B cell (primary cell): ENCODE measurements at regions of chr12 and their contacts with region 1.

Region 1: GRCh38 chr12:21677622-21678277 is 20.1 kb upstream of the LDHB start:
- DNase-seq: no peak
- ATAC-seq: no peak
- H3K4me3 ChIP-seq: no peak overlapping the region
- H3K4me3 Mint-ChIP-seq: no peak overlapping the region
- H3K27ac ChIP-seq: no peak overlapping the region
- H3K27ac Mint-ChIP-seq: no peak overlapping the region
- H3K4me1 ChIP-seq: no peaks in the 10 kb centered on the region
- H3K4me1 Mint-ChIP-seq: no peaks in the 10 kb centered on the region
- H3K27me3 ChIP-seq: no peaks in the 10 kb centered on the region
- H3K27me3 Mint-ChIP-seq: peaks cover 11% of the 10 kb centered on the region
- CTCF ChIP-seq: no peak

Region 2: DNA sequence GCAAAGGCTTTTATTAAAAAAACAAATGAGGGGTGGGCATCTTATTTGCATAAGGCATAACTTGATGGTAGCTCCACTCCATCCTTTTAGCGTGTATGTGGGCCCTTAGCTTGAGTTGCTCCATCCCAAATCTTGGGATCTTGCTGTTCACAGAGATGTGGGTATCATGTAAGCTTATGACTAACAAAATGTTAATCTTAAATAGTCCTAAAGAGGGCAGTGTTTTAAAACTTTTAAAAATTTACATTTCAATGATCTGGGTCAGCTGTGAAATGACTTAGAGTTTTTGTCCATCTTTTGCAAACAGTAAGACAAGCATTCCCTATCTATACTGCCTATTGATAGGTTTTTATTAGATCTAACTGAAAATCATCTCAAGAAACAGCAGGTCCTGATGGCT is 429.1 kb before region 1 on chr12:
- CTCF ChIA-PET with region 1: interaction called, 29 read pairs
- POLR2A ChIA-PET with region 1: no interaction called
- intact Hi-C with region 1: loop called (anchors 1 kb)
- DNase-seq: no peak
- ATAC-seq: no peak
- H3K4me3 ChIP-seq: no peak overlapping the region
- H3K4me3 Mint-ChIP-seq: no peak overlapping the region
- H3K27ac ChIP-seq: no peak overlapping the region
- H3K27ac Mint-ChIP-seq: no peak overlapping the region
- H3K4me1 ChIP-seq: no peaks in the 10 kb centered on the region
- H3K4me1 Mint-ChIP-seq: no peaks in the 10 kb centered on the region
- H3K27me3 ChIP-seq: no peaks in the 10 kb centered on the region
- H3K27me3 Mint-ChIP-seq: no peaks in the 10 kb centered on the region
- CTCF ChIP-seq: peak; percentile 18

Region 3: GRCh38 chr12:21501379-21501956 is 176.3 kb before region 1 on chr12 and contains the starts of genes GOLT1B and RECQL:
- CTCF ChIA-PET with region 1: interaction called, 3 read pairs
- POLR2A ChIA-PET with region 1: no interaction called
- intact Hi-C with region 1: loop called (anchors 1 kb)
- DNase-seq: peak; percentile 96
- ATAC-seq: peak; percentile 95
- H3K4me3 ChIP-seq: peak within 1 kb of the TSS; percentile 69 to 97 (median 92)
- H3K4me3 Mint-ChIP-seq: no peak within 1 kb of the TSS
- H3K27ac ChIP-seq: peak within 1 kb of the TSS; percentile 70 to 89
- H3K27ac Mint-ChIP-seq: no peak within 1 kb of the TSS
- H3K4me1 ChIP-seq: peaks cover 26 to 28% of the 10 kb centered on the region in 2 donors
- H3K4me1 Mint-ChIP-seq: peaks cover 37% of the 10 kb centered on the region
- H3K27me3 ChIP-seq: no peaks in the 10 kb centered on the region
- H3K27me3 Mint-ChIP-seq: no peaks in the 10 kb centered on the region
- CTCF ChIP-seq: no peak
- total RNA-seq, gene GOLT1B: 25.1 and 26.3 TPM in 2 replicates
- total RNA-seq, gene RECQL: 54.8 and 56.3 TPM in 2 replicates

Region 4: DNA sequence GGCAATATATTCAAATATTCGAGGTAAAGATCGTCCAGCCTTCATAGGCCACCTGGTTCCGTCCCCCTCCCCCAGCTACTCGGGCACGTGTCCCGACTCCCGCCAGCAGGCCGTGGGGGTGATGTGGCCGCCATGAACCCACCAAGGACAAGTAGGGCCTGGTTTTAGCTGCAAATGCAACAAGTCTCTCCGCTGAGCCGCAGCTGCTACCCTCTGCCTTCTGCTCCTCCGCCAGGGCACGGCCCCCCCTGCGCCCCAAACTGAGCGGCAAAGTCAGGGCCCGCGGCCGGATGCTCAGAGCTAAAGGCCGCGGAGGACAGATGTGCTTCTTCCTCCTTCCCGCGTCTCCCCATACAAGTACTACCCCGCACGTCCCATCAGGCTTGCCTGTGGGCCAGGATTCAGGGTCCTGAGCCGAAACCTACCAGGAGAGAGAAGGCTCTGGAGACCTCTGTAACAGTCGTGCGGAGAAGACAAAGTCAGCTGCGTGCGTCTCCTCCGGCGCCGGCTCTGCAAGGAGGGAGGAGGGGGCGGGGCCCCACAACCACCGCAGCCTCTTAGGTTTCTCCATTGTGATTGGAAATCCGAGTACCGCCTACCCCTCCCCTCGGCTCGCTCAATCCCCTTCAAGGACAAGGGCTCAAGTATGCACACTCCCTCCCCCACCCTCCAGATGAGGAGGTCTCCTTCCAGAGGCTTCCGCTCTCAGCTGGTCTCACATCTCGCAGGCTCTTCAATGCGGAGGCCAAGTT is 20.2 kb before region 1 on chr12 and contains the start of gene LDHB:
- CTCF ChIA-PET with region 1: interaction called, 6 read pairs
- POLR2A ChIA-PET with region 1: no interaction called
- intact Hi-C with region 1: loop called (anchors 2 kb)
- DNase-seq: peak; percentile 85
- ATAC-seq: peak; percentile 96
- H3K4me3 ChIP-seq: peak within 1 kb of the TSS; percentile 81 to 94 (median 88)
- H3K4me3 Mint-ChIP-seq: peak within 1 kb of the TSS; percentile 93
- H3K27ac ChIP-seq: peak within 1 kb of the TSS; percentile 61 to 68
- H3K27ac Mint-ChIP-seq: peak within 1 kb of the TSS; percentile 97
- H3K4me1 ChIP-seq: peaks cover 8 to 13% of the 10 kb centered on the region in 2 donors
- H3K4me1 Mint-ChIP-seq: peaks cover 30% of the 10 kb centered on the region
- H3K27me3 ChIP-seq: peaks cover 0 to 2% (median 0%) of the 10 kb centered on the region in 4 experiments
- H3K27me3 Mint-ChIP-seq: peaks cover 11% of the 10 kb centered on the region
- CTCF ChIP-seq: no peak
- total RNA-seq, gene LDHB: 161 and 163 TPM in 2 replicates

Region 5: GRCh38 chr12:21697904-21698630 is 20.3 kb after region 1 on chr12:
- CTCF ChIA-PET with region 1: interaction called, 16 read pairs
- POLR2A ChIA-PET with region 1: no interaction called
- intact Hi-C with region 1: no loop called
- DNase-seq: peak; percentile 37
- ATAC-seq: no peak
- H3K4me3 ChIP-seq: no peak overlapping the region
- H3K4me3 Mint-ChIP-seq: no peak overlapping the region
- H3K27ac ChIP-seq: no peak overlapping the region
- H3K27ac Mint-ChIP-seq: no peak overlapping the region
- H3K4me1 ChIP-seq: no peaks in the 10 kb centered on the region
- H3K4me1 Mint-ChIP-seq: no peaks in the 10 kb centered on the region
- H3K27me3 ChIP-seq: no peaks in the 10 kb centered on the region
- H3K27me3 Mint-ChIP-seq: peaks cover 3% of the 10 kb centered on the region
- CTCF ChIP-seq: peak; percentile 77

Region 6: GRCh38 chr12:22064968-22065367 is 387.2 kb after region 1 on chr12:
- CTCF ChIA-PET with region 1: no interaction called
- POLR2A ChIA-PET with region 1: no interaction called
- intact Hi-C with region 1: no loop called
- DNase-seq: no peak
- ATAC-seq: no peak
- H3K4me3 ChIP-seq: no peak overlapping the region
- H3K4me3 Mint-ChIP-seq: no peak overlapping the region
- H3K27ac ChIP-seq: no peak overlapping the region
- H3K27ac Mint-ChIP-seq: no peak overlapping the region
- H3K4me1 ChIP-seq: no peaks in the 10 kb centered on the region
- H3K4me1 Mint-ChIP-seq: no peaks in the 10 kb centered on the region
- H3K27me3 ChIP-seq: no peaks in the 10 kb centered on the region
- H3K27me3 Mint-ChIP-seq: no peaks in the 10 kb centered on the region
- CTCF ChIP-seq: no peak